ENCODE measurements at regions of chr10 and their contacts with region 1.

Region 1: GRCh38 chr10:28241741-28242399 is 61.0 kb downstream of the MPP7 start:
- DNase-seq: peak; percentile 68
- ATAC-seq: peak; percentile 92
- H3K4me3 ChIP-seq: no peak overlapping the region
- H3K27ac ChIP-seq: peak overlapping the region; percentile 96
- H3K4me1 ChIP-seq: peaks cover 68 to 77% of the 10 kb centered on the region in 2 experiments
- H3K27me3 ChIP-seq: no peaks in the 10 kb centered on the region
- CTCF ChIP-seq: peak; percentile 80 to 97 (median 84)
- POLR2A ChIP-seq: no peak
- RAD21 ChIP-seq: peak; percentile 98

Region 2: GRCh38 chr10:27446091-27446918 is 795.6 kb before region 1 on chr10:
- CTCF ChIA-PET with region 1: interaction called, 4 read pairs
- POLR2A ChIA-PET with region 1: no interaction called
- RAD21 ChIA-PET with region 1: no interaction called
- intact Hi-C with region 1: loop called (anchors 5 kb)
- DNase-seq: peak; percentile 23
- ATAC-seq: peak; percentile 70
- H3K4me3 ChIP-seq: peak overlapping the region; percentile 2 to 31; a peak in 2 of 4 replicates
- H3K27ac ChIP-seq: no peak overlapping the region
- H3K4me1 ChIP-seq: peaks cover 9 to 10% of the 10 kb centered on the region in 2 experiments; a peak in 3 of 4 replicates
- H3K27me3 ChIP-seq: no peaks in the 10 kb centered on the region
- CTCF ChIP-seq: peak; percentile 37 to 60 (median 53); a peak in 4 of 6 replicates
- POLR2A ChIP-seq: no peak
- RAD21 ChIP-seq: peak; percentile 73

Region 3: GRCh38 chr10:27661514-27662286 is 580.2 kb before region 1 on chr10:
- CTCF ChIA-PET with region 1: no interaction called
- POLR2A ChIA-PET with region 1: no interaction called
- RAD21 ChIA-PET with region 1: no interaction called
- intact Hi-C with region 1: loop called (anchors 5 kb)
- DNase-seq: no peak
- ATAC-seq: no peak
- H3K4me3 ChIP-seq: no peak overlapping the region
- H3K27ac ChIP-seq: no peak overlapping the region
- H3K4me1 ChIP-seq: peaks cover 0 to 34% of the 10 kb centered on the region in 2 experiments; a peak in 3 of 4 replicates
- H3K27me3 ChIP-seq: no peaks in the 10 kb centered on the region
- CTCF ChIP-seq: no peak
- POLR2A ChIP-seq: no peak
- RAD21 ChIP-seq: no peak

Region 4: GRCh38 chr10:27783660-27784059 is 458.2 kb before region 1 on chr10:
- CTCF ChIA-PET with region 1: interaction called, 19 read pairs
- POLR2A ChIA-PET with region 1: no interaction called
- RAD21 ChIA-PET with region 1: interaction called in 1 of 2 experiments, 9 read pairs
- intact Hi-C with region 1: loop called (anchors 1 kb)
- DNase-seq: peak; percentile 81
- ATAC-seq: peak; percentile 98
- H3K4me3 ChIP-seq: no peak overlapping the region
- H3K27ac ChIP-seq: peak overlapping the region; percentile 52
- H3K4me1 ChIP-seq: peaks cover 7 to 20% of the 10 kb centered on the region in 2 experiments; a peak in 3 of 4 replicates
- H3K27me3 ChIP-seq: no peaks in the 10 kb centered on the region
- CTCF ChIP-seq: peak; percentile 71 to 74 (median 74); a peak in 5 of 6 replicates
- POLR2A ChIP-seq: no peak
- RAD21 ChIP-seq: peak; percentile 92

Region 5: DNA sequence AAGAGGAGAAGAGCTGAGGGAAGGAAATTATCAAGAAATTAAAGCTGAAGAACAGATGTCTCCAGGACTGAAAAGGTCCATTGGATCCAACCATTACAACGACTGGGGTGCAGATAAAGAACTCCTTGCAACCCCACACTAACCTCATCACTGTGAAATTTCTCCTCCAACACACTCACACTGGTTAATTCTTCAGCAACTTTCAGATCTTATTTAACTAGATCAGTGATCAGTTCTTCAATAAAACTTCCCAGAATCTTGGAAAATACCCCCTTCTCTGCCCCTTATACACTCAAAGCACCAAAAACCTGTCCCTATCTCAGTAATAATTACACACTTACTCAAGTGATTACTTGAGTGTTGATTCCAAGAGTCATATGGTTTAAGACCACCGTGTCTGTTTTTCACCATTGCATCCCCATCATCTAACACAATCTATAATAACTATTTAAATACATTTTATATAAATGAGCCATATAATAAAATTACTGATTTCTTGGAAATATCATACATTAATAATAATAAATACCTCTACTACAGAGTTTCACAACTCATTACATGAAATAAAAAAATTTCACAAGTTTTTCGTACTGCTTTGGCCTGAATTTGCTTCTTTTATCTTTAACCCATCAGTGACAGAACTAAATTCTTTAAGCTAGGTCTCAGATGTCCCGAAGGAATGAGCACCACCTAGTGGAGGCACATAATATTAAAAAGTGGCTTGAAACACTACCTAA is 62.7 kb before region 1 on chr10:
- CTCF ChIA-PET with region 1: interaction called, 12 read pairs
- POLR2A ChIA-PET with region 1: interaction called, 4 read pairs
- RAD21 ChIA-PET with region 1: interaction called, 3 read pairs
- intact Hi-C with region 1: loop called (anchors 1 kb)
- DNase-seq: peak; percentile 69
- ATAC-seq: peak; percentile 57
- H3K4me3 ChIP-seq: peak overlapping the region; percentile 31 to 42; a peak in 3 of 4 replicates
- H3K27ac ChIP-seq: peak overlapping the region; percentile 94
- H3K4me1 ChIP-seq: peaks cover 79% of the 10 kb centered on the region in 2 experiments
- H3K27me3 ChIP-seq: no peaks in the 10 kb centered on the region
- CTCF ChIP-seq: peak; percentile 45 to 77 (median 75)
- POLR2A ChIP-seq: no peak
- RAD21 ChIP-seq: peak; percentile 95

Measured in HCT116 (cell line).